ENCODE measurements at regions of chr9 and their contacts with region 1.

Region 1: GRCh38 chr9:35161713-35162604 is at the start of gene UNC13B:
- DNase-seq: peak; percentile 87
- ATAC-seq: peak; percentile 95
- H3K4me3 ChIP-seq: peak within 1 kb of the TSS; percentile 79
- H3K27ac ChIP-seq: peak within 1 kb of the TSS; percentile 63
- H3K4me1 ChIP-seq: peaks cover 21% of the 10 kb centered on the region
- H3K27me3 ChIP-seq: no peaks in the 10 kb centered on the region
- CTCF ChIP-seq: no peak; the same call in 1 of the 2 replicates
- total RNA-seq, gene UNC13B: 9.8 and 10.4 TPM in 2 replicates

Region 2: DNA sequence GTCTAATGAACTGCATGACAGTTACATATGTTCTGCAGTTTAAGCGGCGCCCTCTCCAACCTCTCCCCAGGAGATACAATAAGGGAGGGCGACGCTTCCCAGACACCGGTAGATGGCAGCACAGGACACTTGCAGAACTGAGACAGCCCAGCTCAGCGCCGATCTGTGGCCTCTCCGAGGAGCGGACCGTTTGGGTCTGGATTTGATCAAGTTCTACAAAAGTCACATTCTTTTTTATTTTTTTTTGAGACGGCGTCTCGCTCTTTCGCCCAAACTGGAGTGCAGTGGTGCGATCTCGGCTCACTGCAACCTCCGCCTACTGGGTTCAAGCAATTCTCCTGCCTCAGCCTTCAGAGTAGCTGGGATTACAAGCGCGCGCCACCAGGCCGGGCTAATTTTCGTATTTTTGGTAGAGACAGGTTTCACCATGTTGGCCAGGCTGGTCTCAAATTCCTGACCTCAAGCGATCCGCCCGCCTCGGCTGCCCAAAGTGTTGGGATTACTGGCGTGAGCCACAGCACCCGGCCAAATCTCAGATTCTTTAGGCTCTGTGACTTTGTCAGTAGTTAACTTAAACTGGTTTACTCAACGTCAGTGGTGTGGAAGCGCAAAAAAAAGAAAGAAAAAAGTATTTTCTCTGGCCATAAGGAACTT is 44.9 kb before region 1 on chr9:
- CTCF ChIA-PET with region 1: interaction called, 13 read pairs
- POLR2A ChIA-PET with region 1: no interaction called
- intact Hi-C with region 1: loop called (anchors 1 kb)
- DNase-seq: peak; percentile 89
- ATAC-seq: peak; percentile 53
- H3K4me3 ChIP-seq: peak overlapping the region; percentile 83
- H3K27ac ChIP-seq: peak overlapping the region; percentile 36
- H3K4me1 ChIP-seq: peaks cover 32% of the 10 kb centered on the region
- H3K27me3 ChIP-seq: no peaks in the 10 kb centered on the region
- CTCF ChIP-seq: peak; percentile 87

Region 3: DNA sequence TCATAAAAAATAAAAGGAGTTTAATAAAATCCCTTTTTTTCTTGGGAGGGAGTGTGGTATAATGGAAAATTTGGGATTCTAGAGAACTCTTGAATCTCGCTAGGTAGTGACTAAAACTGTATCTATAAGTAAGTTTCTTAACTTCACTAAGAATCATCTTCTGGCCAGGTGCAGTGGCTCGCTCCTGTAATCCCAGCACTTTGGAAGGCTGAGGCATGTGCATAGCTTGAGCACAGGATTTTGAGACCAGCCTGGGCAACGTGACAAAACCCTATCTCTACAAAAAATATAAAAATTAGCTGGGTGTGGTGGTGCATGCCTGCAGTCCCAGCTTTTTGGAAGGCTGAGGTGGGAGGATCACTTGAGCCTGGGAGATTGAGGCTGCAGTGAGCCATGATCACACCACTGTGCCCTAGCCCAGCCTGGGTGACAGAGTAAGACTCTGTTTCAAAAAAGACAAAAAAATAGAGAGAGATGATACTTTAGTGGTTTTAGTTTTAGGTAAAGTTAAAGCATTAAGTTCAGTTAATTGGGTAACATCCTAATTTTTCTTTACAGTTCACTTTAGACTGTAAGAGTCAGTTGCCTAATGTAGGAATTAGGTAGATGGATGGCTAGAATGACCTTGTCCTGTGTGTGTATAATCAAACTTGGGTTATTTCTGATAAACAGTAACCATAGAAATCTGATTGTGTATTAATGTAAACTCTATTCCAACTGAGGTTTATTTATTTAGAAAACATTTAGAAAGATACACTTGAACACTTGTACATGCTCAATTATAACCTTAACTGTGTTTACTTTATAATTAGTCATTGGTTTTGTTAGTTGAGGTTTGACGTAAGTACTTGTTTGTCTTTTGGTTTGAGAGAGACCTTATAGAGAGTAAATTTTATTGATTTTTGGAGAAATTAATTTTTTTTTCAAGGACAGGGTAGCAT is 17.7 kb after region 1 on chr9:
- CTCF ChIA-PET with region 1: no interaction called
- POLR2A ChIA-PET with region 1: no interaction called
- intact Hi-C with region 1: loop called (anchors 2 kb)
- DNase-seq: peak; percentile 57
- ATAC-seq: peak; percentile 79
- H3K4me3 ChIP-seq: 0 out of 2 replicates have a peak overlapping the region, but pooled peaks have one; percentile 14
- H3K27ac ChIP-seq: peak overlapping the region; percentile 94
- H3K4me1 ChIP-seq: peaks cover 23% of the 10 kb centered on the region
- H3K27me3 ChIP-seq: no peaks in the 10 kb centered on the region
- CTCF ChIP-seq: no peak

Region 4: DNA sequence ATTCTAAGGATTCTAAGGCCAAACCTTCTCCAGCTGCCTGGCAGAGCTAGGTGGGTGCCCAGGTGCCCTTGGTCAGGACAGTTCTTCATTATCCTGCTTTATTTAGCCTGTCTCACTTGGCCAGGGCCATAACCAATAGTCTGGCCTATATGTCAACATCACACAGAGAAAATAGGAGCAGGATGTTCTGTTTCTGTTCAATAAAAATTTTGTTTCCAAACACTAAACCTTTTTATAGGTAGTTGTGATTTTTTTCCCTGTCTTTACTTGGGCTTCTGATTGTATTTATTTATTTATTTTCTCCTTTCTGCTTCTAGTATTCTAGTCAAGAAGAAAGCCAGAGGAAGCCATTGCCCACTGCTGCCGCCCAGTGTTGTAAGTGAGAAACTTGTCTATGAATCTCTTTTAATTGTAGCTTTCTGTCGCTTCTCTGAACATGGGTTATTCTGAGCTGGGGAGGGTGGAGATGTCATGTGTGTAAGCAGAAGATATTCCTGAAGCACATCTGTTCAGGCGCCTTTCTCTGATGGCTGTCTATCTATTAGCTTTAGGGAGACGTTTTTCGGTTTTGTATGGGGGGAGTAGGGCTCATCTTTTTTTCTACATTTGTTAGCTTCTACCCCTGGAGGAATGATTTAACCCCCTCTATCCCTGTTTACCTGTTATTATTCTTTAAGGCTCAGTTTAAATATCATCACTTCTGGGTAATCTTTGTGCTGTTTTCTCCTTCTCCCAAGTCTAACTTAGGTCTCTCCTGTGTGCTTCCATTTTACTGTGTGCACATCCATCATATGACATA is 96.9 kb after region 1 on chr9:
- CTCF ChIA-PET with region 1: interaction called, 6 read pairs
- POLR2A ChIA-PET with region 1: interaction called, 5 read pairs
- intact Hi-C with region 1: loop called (anchors 10 kb)
- DNase-seq: peak; percentile 66
- ATAC-seq: peak; percentile 53
- H3K4me3 ChIP-seq: no peak overlapping the region
- H3K27ac ChIP-seq: no peak overlapping the region
- H3K4me1 ChIP-seq: no peaks in the 10 kb centered on the region
- H3K27me3 ChIP-seq: no peaks in the 10 kb centered on the region
- CTCF ChIP-seq: peak; percentile 75

Region 5: DNA sequence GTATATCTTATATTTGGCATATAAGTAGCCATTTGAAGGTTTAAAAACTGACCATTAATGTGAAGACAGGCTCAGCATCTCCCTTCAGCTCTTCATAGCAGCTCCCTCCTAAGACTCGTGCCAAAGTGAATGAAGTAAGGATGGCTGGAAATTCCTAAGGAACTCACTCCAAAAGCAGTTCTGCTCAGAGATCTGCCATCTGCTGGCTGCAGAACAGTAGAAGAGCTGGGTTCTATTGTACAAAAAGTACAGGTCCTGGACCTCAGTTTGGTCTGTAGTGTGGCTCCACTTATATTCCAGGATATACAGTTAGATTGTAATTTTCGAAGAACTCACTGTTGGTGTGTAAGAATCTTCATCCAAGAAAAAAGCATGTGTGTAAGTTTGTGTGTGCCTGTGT is 223.1 kb after region 1 on chr9:
- CTCF ChIA-PET with region 1: no interaction called
- POLR2A ChIA-PET with region 1: no interaction called
- intact Hi-C with region 1: no loop called
- DNase-seq: peak; percentile 20
- ATAC-seq: peak; percentile 15; the same call in 1 of the 2 replicates
- H3K4me3 ChIP-seq: no peak overlapping the region
- H3K27ac ChIP-seq: no peak overlapping the region
- H3K4me1 ChIP-seq: no peaks in the 10 kb centered on the region
- H3K27me3 ChIP-seq: no peaks in the 10 kb centered on the region
- CTCF ChIP-seq: peak; percentile 37

Region 6: GRCh38 chr9:35470894-35471293 is 308.9 kb after region 1 on chr9:
- CTCF ChIA-PET with region 1: no interaction called
- POLR2A ChIA-PET with region 1: interaction called, 5 read pairs
- intact Hi-C with region 1: loop called (anchors 10 kb)
- DNase-seq: peak; percentile 86
- ATAC-seq: peak; percentile 97
- H3K4me3 ChIP-seq: peak overlapping the region; percentile 24; the same call in 1 of the 2 replicates
- H3K27ac ChIP-seq: peak overlapping the region; percentile 92
- H3K4me1 ChIP-seq: peaks cover 25% of the 10 kb centered on the region
- H3K27me3 ChIP-seq: no peaks in the 10 kb centered on the region
- CTCF ChIP-seq: no peak

Region 7: GRCh38 chr9:35481347-35481975 is 319.5 kb after region 1 on chr9:
- CTCF ChIA-PET with region 1: interaction called, 10 read pairs
- POLR2A ChIA-PET with region 1: no interaction called
- intact Hi-C with region 1: loop called (anchors 10 kb)
- DNase-seq: peak; percentile 74
- ATAC-seq: peak; percentile 54; the same call in 1 of the 2 replicates
- H3K4me3 ChIP-seq: no peak overlapping the region
- H3K27ac ChIP-seq: no peak overlapping the region
- H3K4me1 ChIP-seq: peaks cover 6% of the 10 kb centered on the region; the same call in 1 of the 2 replicates
- H3K27me3 ChIP-seq: no peaks in the 10 kb centered on the region
- CTCF ChIP-seq: peak; percentile 74

Measured in PC-3 (cell line).